ENCODE measurements at regions of chr2 and their contacts with region 1.

Region 1: DNA sequence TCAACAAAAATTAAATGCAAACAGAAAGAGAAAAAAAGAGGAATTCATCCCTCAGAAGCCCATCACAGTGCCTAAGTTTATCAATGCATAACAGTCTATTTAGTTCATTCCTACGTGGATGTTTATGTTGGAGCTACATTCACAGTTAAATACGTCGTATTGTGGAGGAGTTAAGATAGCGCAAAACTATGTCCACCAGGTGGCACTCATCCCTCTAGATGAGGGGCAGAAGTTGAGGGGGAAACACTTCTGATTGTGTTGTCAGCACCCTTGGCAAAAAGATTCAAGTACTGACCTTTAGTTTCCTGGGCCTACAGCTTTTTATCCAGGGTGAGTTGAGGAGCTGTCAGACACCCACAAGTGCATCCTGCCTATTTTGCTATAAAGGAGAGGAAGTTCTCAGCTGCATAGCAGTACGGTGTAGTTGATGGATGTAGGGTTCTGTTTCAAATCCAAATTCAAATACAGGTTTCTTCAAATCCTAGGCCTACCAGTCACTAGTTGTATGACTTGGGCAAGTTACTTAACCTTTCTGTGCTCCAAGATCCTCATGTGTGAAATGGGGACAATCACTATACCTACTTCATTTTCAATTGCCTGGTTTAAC is 26.8 kb upstream of the MYO1B start:
- DNase-seq: no peak
- ATAC-seq: peak; percentile 78

Region 2: DNA sequence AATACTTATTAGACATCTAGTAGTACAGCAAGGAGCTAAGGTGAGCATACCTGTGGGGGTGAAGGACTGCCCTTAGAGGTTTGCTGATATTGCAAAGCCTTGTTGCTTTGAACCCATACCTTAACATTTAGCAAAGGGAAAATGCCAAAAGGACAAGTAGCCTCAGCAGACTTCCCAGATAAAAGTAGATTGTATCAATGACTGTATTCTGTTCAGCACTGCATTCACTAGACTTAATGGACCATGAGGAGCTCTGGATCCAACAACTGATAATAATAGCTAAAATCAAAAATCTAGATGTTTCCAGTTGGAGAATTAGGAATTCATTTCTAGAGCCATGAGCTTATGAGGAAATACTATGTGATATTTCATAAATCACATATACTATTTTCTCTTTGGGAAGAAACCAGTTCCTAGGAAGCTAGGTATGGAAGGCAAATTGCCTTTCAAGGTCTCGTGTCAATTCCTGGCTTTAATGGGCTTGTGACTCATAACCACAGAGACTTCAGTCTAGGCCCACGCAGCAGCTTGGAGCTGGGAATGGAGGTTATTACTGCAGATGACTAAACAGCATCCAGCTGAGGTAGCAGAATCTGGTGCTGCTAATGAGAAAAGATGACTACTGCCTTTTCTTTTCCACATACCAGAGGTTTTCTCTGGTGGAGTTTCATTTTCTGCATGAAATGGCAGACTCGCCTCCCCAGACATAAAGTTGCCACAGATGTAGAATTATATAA is 268.4 kb after region 1 on chr2:
- intact Hi-C with region 1: no loop called
- DNase-seq: no peak
- ATAC-seq: no peak

Region 3: DNA sequence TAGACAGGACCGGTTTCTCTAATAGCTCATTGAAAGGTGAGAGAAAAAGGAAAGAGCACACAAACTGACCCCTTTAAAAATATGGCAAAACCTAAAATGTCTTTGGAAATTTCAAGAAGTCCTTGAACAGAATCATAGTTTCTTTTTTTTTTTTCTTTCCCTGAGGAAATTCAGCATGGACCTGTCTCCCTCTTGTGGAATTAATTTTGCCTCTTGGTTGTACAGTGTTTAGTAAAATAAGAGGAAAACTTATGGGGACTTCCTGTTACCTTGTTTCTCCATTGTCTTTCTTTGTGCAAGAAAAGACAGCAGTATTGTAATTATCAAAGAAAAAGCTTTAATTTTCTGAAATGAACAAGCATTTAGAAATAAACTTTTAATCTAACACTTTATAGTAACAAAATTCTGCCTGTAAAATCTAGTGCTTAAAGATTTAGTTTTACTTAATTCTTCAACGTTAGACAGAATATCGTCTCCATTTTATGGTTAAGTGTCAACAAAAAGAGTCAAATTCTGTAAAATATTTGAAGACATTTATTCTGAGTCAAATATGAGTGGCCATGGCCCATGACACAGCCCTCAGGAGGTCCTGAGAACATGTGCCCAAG is 283.3 kb after region 1 on chr2:
- intact Hi-C with region 1: loop called (anchors 5 kb)
- DNase-seq: no peak
- ATAC-seq: peak; percentile 77

Measured in Right ventricle myocardium superior (tissue), 1 donor.